GM12878 (cell line): ENCODE measurements at regions of chr13 and their contacts with region 1.

Region 1: DNA sequence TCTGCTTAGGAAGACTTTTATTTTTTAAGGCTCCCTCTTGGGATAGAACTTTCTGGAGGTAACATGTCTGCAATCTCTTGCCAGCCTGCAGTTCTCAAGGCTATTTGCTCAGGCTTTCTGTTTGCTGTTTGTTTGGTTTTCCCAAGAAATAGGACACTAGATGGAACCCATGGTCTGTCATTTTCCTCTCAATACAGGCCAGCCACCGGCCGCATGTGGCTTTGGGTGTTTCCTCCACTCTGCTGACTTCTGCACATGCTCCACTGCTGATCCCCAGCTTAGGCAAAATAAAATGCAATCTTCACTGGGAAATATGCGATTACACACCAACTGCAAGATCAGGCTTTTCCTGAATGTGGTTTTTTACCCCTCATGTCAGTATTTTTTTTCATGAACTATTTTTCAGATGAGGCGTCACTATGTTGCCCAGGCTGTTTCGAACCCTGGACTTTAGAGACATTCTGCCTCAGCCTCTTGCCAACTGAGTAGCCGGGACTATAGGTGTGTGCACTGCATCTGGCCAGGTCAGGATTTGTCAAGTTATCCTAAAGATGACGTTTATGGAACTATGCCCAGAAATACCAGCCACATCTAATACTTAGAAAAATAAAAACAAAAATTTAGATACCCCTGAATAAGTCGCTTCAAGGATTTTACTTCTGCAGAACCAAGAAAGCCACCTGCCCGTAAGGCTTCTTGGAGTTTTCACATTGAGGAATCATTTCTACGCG is 94.3 kb upstream of the PABPC3 start:
- DNase-seq: no peak
- ATAC-seq: no peak
- H3K4me3 ChIP-seq: no peak overlapping the region
- H3K27ac ChIP-seq: no peak overlapping the region
- H3K4me1 ChIP-seq: no peaks in the 10 kb centered on the region
- H3K27me3 ChIP-seq: 0 out of 4 replicates have a peak, but pooled peaks cover 0 to 1% of the 10 kb centered on the region in 2 experiments
- CTCF ChIP-seq: no peak
- EP300 ChIP-seq: no peak
- POLR2A ChIP-seq: no peak
- RAD21 ChIP-seq: no peak

Region 2: GRCh38 chr13:25037057-25037813 is 35.6 kb after region 1 on chr13:
- CTCF ChIA-PET with region 1: interaction called, 7 read pairs
- POLR2A ChIA-PET with region 1: no interaction called
- RAD21 ChIA-PET with region 1: interaction called, 3 read pairs
- SMC1A ChIA-PET with region 1: no interaction called
- in situ Hi-C with region 1: no loop called
- intact Hi-C with region 1: loop called (anchors 1 kb)
- DNase-seq: no peak
- ATAC-seq: peak; percentile 96
- H3K4me3 ChIP-seq: no peak overlapping the region
- H3K27ac ChIP-seq: no peak overlapping the region
- H3K4me1 ChIP-seq: no peaks in the 10 kb centered on the region; the same call in 1 of the 2 replicates
- H3K27me3 ChIP-seq: peaks cover 2 to 3% of the 10 kb centered on the region in 2 experiments; a peak in 3 of 4 replicates
- CTCF ChIP-seq: peak; percentile 69 to 83 (median 73)
- EP300 ChIP-seq: no peak
- POLR2A ChIP-seq: no peak
- RAD21 ChIP-seq: peak; percentile 77

Region 3: DNA sequence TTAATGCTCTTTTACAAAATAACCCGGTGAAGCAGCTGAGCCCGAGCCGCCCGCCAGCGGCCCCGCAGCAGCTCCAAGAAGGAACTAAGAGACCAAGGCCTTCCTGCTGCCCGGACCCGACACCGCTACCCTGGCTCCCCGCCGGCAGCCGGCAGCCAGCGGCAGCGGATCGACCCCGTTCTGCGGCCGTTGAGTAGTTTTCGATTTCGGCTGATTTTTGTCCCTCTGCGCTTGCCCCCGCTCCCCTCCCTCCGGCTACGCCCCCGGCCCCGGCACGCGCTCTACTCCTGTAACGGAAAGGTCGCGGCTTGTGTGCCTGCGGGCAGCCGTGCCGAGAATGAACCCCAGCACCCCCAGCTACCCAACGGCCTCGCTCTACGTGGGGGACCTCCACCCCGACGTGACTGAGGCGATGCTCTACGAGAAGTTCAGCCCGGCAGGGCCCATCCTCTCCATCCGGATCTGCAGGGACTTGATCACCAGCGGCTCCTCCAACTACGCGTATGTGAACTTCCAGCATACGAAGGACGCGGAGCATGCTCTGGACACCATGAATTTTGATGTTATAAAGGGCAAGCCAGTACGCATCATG is 94.3 kb after region 1 on chr13 and contains the start of gene PABPC3:
- CTCF ChIA-PET with region 1: no interaction called
- POLR2A ChIA-PET with region 1: no interaction called
- RAD21 ChIA-PET with region 1: no interaction called
- SMC1A ChIA-PET with region 1: no interaction called
- in situ Hi-C with region 1: no loop called
- intact Hi-C with region 1: no loop called
- DNase-seq: no peak
- ATAC-seq: no peak
- H3K4me3 ChIP-seq: no peak within 1 kb of the TSS
- H3K27ac ChIP-seq: no peak within 1 kb of the TSS
- H3K4me1 ChIP-seq: no peaks in the 10 kb centered on the region
- H3K27me3 ChIP-seq: peaks cover 0 to 6% of the 10 kb centered on the region in 2 experiments; a peak in 2 of 4 replicates
- CTCF ChIP-seq: no peak
- EP300 ChIP-seq: no peak
- POLR2A ChIP-seq: no peak
- RAD21 ChIP-seq: no peak
- polyA plus RNA-seq, gene PABPC3: 0.26 to 0.35 TPM